ENCODE measurements at regions of chr5 and their contacts with region 1.

Region 1: GRCh38 chr5:155616779-155617392 is 603.3 kb downstream of the KIF4B start:
- DNase-seq: peak; percentile 43
- ATAC-seq: peak; percentile 47

Region 2: GRCh38 chr5:154967421-154968024 is 649.4 kb before region 1 on chr5:
- intact Hi-C with region 1: loop called (anchors 10 kb)
- DNase-seq: no peak
- ATAC-seq: peak; percentile 25

Measured in left ventricle myocardium superior (tissue), 1 donor.